ENCODE measurements at regions of chr7 and their contacts with region 1.

Region 1: DNA sequence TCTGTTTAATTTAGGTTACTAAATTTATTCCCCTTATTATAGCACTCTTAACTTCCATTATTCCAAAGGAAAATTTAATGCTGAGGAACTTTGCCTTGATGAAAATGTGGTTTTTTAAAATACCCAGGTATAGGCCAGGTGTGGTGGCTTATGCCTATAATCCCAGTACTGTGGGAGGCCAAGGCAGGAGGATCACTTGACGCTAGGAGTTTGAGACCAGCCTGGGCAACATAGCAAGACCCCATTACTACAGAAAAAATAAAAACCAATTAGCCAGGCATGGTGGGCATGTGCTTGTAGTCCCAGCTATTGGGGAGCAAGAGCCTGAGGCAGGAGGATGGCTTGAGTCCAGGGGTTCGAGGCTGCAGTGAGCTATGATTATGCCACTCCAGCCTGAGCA is 32.4 kb downstream of the TMEM243 start:
- DNase-seq: no peak
- H3K4me3 ChIP-seq: no peak overlapping the region
- H3K27ac ChIP-seq: no peak overlapping the region
- H3K4me1 ChIP-seq: no peaks in the 10 kb centered on the region; a peak in 1 of 4 replicates
- H3K27me3 ChIP-seq: no peaks in the 10 kb centered on the region
- CTCF ChIP-seq: no peak
- EP300 ChIP-seq: no peak
- RAD21 ChIP-seq: no peak

Region 2: GRCh38 chr7:86884152-86884551 is 303.0 kb before region 1 on chr7:
- CTCF ChIA-PET with region 1: no interaction called
- POLR2A ChIA-PET with region 1: no interaction called
- DNase-seq: no peak
- H3K4me3 ChIP-seq: no peak overlapping the region
- H3K27ac ChIP-seq: no peak overlapping the region
- H3K4me1 ChIP-seq: no peaks in the 10 kb centered on the region
- H3K27me3 ChIP-seq: no peaks in the 10 kb centered on the region
- CTCF ChIP-seq: no peak
- EP300 ChIP-seq: no peak
- RAD21 ChIP-seq: no peak

Region 3: GRCh38 chr7:87173471-87173870 is 13.6 kb before region 1 on chr7:
- CTCF ChIA-PET with region 1: interaction called, 24 read pairs
- POLR2A ChIA-PET with region 1: no interaction called
- DNase-seq: no peak
- H3K4me3 ChIP-seq: no peak overlapping the region
- H3K27ac ChIP-seq: no peak overlapping the region
- H3K4me1 ChIP-seq: no peaks in the 10 kb centered on the region; a peak in 2 of 4 replicates
- H3K27me3 ChIP-seq: no peaks in the 10 kb centered on the region
- CTCF ChIP-seq: no peak
- EP300 ChIP-seq: no peak
- RAD21 ChIP-seq: no peak